Heart left ventricle (tissue), 16 donors: ENCODE measurements at regions of chr4 and their contacts with region 1.

Region 1: GRCh38 chr4:140851032-140851636 is 94.9 kb upstream of the TBC1D9 start:
- DNase-seq: peak in 2 of 5 donors; percentile 37 to 52
- ATAC-seq: peak in 3 of 4 donors; percentile 59 to 65 (median 64)
- H3K4me3 ChIP-seq: no peak overlapping the region
- H3K27ac ChIP-seq: no peak overlapping the region
- H3K4me1 ChIP-seq: peaks cover 0 to 5% (median 2%) of the 10 kb centered on the region in 12 donors
- H3K27me3 ChIP-seq: no peaks in the 10 kb centered on the region
- CTCF ChIP-seq: peak; percentile 65 to 90 (median 82)
- POLR2A ChIP-seq: no peak

Region 2: GRCh38 chr4:140359562-140360427 is 491.3 kb before region 1 on chr4:
- intact Hi-C with region 1: loop called (anchors 1 to 10 kb)
- DNase-seq: peak in 4 of 5 donors; percentile 63 to 75 (median 70)
- ATAC-seq: peak in 3 of 4 donors; percentile 76 to 90 (median 79)
- H3K4me3 ChIP-seq: no peak overlapping the region
- H3K27ac ChIP-seq: no peak overlapping the region
- H3K4me1 ChIP-seq: no peaks in the 10 kb centered on the region
- H3K27me3 ChIP-seq: peaks cover 0 to 4% (median 0%) of the 10 kb centered on the region in 9 donors
- CTCF ChIP-seq: peak; percentile 67 to 84 (median 78)
- POLR2A ChIP-seq: no peak

Region 3: DNA sequence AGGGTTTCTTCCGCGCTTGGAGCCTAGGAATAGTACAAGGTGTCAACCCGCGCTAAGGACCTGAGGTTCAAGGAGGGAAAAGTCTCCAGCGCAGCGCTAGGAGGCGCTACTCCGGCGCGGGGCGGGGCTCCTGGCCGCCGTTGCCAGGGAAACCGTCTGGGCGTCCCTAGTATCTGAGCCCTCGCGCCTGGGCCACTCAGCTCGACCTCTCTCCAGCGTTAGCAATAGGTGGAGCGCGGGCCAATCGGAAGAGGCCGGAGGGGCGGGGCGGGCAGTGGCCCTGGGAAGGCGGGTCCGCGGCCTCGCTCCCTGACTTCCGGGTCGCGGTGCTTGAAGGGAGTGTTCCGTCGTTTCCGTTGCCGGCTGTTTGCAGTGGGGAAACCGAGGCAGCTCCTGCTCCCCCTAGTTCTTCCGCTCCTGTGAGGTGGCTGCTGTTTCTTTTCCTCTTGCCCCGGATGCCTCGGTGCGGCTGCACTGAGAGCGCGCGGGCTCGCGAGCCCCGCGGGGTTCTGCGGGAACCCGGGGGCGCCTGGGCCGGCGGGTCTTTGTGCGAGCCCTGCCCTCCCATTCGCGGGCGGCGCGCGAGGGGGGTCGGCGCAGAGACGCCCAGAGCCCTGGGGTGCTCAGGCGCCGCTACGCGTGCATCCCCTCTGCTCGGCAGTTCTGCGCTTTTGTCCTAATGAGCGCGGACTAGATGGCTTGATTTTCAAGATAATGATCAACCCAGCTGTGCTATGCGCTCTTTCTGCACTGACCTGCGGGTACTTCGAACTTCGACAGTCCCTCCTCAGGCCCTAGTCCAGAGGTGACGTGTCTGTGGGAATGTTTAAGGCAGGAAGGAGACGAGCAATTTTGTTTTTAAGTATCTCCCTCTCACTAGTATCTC is 327.0 kb before region 1 on chr4 and contains the start of gene ELMOD2:
- intact Hi-C with region 1: loop called in 7 of 10 experiments (anchors 2 to 10 kb)
- DNase-seq: peak; percentile 99 to 100 (median 99)
- ATAC-seq: peak; percentile 100
- H3K4me3 ChIP-seq: peak within 1 kb of the TSS; percentile 59 to 99 (median 83)
- H3K27ac ChIP-seq: peak within 1 kb of the TSS; percentile 27 to 92 (median 85)
- H3K4me1 ChIP-seq: peaks cover 0 to 34% (median 13%) of the 10 kb centered on the region in 12 donors
- H3K27me3 ChIP-seq: no peaks in the 10 kb centered on the region
- CTCF ChIP-seq: peak; percentile 86 to 99 (median 96)
- POLR2A ChIP-seq: peak in 1 of 2 donors; percentile 81
- total RNA-seq, gene ELMOD2: 11.5 to 22.3 (median 16.5) TPM

Region 4: GRCh38 chr4:140595065-140595464 is 256.1 kb before region 1 on chr4:
- intact Hi-C with region 1: loop called in 3 of 10 experiments (anchors 5 to 10 kb)
- DNase-seq: no peak
- ATAC-seq: peak in 3 of 4 donors; percentile 53 to 65 (median 53)
- H3K4me3 ChIP-seq: no peak overlapping the region
- H3K27ac ChIP-seq: no peak overlapping the region
- H3K4me1 ChIP-seq: no peaks in the 10 kb centered on the region
- H3K27me3 ChIP-seq: no peaks in the 10 kb centered on the region
- CTCF ChIP-seq: peak; percentile 30 to 59 (median 44)
- POLR2A ChIP-seq: no peak

Region 5: GRCh38 chr4:140637836-140638235 is 213.3 kb before region 1 on chr4:
- intact Hi-C with region 1: loop called in 9 of 10 experiments (anchors 5 to 10 kb)
- DNase-seq: no peak
- ATAC-seq: no peak
- H3K4me3 ChIP-seq: no peak overlapping the region
- H3K27ac ChIP-seq: no peak overlapping the region
- H3K4me1 ChIP-seq: peaks cover 0 to 23% (median 6%) of the 10 kb centered on the region in 12 donors
- H3K27me3 ChIP-seq: no peaks in the 10 kb centered on the region
- CTCF ChIP-seq: peak; percentile 23 to 58 (median 40)
- POLR2A ChIP-seq: no peak

Region 6: GRCh38 chr4:140743194-140743931 is 107.8 kb before region 1 on chr4:
- intact Hi-C with region 1: no loop called
- DNase-seq: no peak
- ATAC-seq: peak in 3 of 4 donors; percentile 22 to 54 (median 52)
- H3K4me3 ChIP-seq: no peak overlapping the region
- H3K27ac ChIP-seq: peak overlapping the region in 1 of 12 donors; percentile 14
- H3K4me1 ChIP-seq: peaks cover 0 to 47% (median 22%) of the 10 kb centered on the region in 12 donors
- H3K27me3 ChIP-seq: no peaks in the 10 kb centered on the region
- CTCF ChIP-seq: peak in 5 of 12 donors; percentile 15 to 46 (median 29)
- POLR2A ChIP-seq: no peak